ENCODE measurements at regions of chr16 and their contacts with region 1.

Region 1: DNA sequence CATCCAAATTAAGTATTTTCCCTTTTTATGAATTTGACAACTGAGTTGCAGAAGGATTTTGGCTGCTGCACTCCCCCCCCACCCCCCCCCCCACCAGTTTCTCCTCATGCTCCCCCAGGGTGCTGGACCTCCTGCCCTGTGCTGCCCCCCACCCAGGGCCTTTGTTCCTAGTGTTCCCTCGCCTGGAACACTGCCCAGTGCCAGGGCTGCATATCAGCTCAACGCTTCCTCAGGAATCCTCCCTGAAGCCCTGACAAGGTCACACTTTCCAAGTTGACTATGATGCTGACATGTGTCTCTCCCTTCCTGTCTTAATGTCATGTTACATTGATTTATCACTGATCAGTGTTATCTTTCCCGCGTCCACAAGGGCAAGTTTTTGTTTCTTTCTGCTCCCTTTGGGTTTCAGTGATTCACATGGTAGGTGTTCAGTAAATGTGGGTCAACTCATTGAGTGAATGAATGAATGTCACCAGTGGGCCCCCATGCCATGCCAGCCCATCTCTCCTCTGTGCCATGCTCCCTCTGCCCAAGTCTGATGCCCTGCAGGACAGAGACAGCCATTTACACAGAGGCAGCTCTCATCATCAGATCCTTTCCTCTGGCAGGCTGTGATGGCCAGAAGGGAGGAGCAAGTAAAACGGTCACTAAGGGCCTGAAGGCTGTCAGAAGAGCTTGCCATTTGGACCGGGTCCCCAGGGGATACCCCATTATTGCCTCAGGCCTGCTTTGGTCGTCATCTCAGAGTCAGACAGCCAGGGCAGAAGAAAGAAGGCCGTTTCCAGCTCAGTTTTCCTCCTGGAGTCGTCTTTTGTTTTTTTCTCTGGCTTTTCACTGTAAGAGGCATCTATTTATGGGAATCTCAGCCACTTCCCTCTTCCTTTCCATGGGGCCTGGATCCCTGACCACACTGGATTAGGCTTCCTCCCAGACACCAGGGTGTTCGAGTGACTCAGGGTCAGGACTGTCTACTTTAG is 386.2 kb downstream of the SNX29 start:
- DNase-seq: no peak
- H3K4me3 ChIP-seq: no peak overlapping the region
- H3K27ac ChIP-seq: peak overlapping the region in 1 of 2 donors; percentile 36
- H3K4me1 ChIP-seq: no peaks in the 10 kb centered on the region
- H3K27me3 ChIP-seq: no peaks in the 10 kb centered on the region
- CTCF ChIP-seq: no peak
- POLR2A ChIP-seq: no peak

Region 2: DNA sequence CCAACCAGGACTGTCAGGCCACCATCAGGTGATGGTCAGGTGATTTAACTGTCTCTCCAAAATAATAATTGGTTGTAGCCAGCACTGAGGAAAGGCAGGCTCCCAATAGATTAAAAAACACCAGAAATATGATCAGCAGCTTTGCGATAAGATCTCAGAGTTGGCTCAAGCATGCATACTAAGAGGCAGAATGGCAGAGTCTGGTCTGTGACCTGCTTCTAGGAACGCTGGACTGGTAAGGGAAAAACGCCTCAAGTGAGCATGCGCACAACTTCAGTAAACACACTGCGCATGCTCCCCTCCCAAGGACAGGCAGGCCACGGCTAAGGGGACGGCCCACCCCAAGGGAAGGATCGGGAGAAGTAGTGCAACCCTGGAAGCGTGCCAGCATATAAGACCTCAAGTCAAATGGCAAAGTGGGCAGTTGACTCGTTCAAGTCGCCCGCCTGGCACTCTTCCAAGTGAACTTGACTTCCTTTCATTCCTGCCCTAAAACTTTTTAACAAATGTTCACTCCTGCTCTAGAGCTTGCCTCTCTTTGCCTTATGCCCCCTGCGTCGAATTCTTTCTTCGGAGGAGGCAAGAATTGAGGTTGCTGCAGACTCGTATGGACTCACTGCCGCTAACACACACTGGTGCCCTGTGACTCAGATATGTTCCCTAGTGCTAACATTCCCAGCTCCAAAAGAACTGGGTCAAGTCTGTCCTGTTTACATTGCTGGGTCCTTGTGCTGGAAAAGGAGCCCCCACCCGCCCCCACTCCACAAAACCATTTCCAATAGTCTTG is 1059.2 kb before region 1 on chr16:
- intact Hi-C with region 1: loop called (anchors 5 kb)
- DNase-seq: peak; percentile 41 to 65
- H3K4me3 ChIP-seq: peak overlapping the region in 1 of 3 donors; percentile 53
- H3K27ac ChIP-seq: peak overlapping the region; percentile 12 to 76
- H3K4me1 ChIP-seq: no peaks in the 10 kb centered on the region
- H3K27me3 ChIP-seq: no peaks in the 10 kb centered on the region
- CTCF ChIP-seq: no peak
- POLR2A ChIP-seq: no peak

Region 3: DNA sequence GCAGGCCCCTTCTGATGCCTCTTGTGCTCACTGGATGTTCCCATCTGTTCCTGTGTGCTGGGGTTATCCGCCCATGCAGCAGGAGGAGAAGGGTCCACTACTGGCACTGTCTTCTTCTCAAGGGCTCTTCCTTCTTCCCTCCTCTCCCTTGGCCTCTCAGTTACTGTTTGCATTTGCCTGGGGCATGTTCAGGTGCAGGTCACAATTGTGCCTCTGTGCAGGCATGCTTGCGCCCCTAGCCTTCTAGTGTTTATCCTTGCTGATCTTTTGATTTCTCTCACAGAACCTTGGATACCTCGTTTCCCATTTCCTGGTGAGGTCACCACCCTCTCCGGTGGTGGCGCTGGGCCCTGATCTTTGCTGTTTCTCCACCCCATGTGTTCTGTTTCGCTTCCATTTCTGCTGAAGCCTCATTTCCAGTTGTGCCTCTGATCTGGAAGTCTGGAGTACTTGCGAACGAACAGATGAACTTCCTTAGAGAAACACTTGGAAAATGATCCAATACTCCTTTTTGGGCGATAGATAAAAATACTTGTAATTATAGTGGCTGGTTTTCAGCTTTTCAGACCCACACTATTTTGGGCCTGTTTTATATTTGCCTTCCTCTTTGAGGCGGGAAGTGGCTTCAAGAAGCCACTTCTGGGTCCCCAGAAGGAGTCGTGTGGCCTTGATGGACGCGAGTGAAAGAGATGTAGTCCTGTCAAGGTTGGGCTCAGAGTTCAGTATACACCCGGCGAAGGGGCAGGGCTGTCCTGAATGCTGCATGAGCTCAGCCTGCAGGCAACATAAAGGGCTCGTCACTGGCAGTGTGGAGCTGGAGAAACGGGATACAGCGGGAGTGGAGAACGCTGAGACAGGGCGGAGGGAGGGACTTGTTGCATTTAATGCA is 73.4 kb before region 1 on chr16:
- intact Hi-C with region 1: no loop called
- DNase-seq: peak in 1 of 2 donors; percentile 64
- H3K4me3 ChIP-seq: peak overlapping the region in 1 of 3 donors; percentile 15
- H3K27ac ChIP-seq: peak overlapping the region; percentile 10 to 25
- H3K4me1 ChIP-seq: no peaks in the 10 kb centered on the region
- H3K27me3 ChIP-seq: no peaks in the 10 kb centered on the region
- CTCF ChIP-seq: no peak
- POLR2A ChIP-seq: no peak

Region 4: GRCh38 chr16:12375046-12375740 is 12.4 kb after region 1 on chr16:
- intact Hi-C with region 1: no loop called
- DNase-seq: no peak
- H3K4me3 ChIP-seq: no peak overlapping the region
- H3K27ac ChIP-seq: peak overlapping the region in 1 of 2 donors; percentile 48
- H3K4me1 ChIP-seq: peaks cover 0 to 8% of the 10 kb centered on the region in 2 donors
- H3K27me3 ChIP-seq: no peaks in the 10 kb centered on the region
- CTCF ChIP-seq: no peak
- POLR2A ChIP-seq: no peak

Region 5: GRCh38 chr16:12426122-12426521 is 63.4 kb after region 1 on chr16:
- intact Hi-C with region 1: no loop called
- DNase-seq: no peak
- H3K4me3 ChIP-seq: no peak overlapping the region
- H3K27ac ChIP-seq: no peak overlapping the region
- H3K4me1 ChIP-seq: no peaks in the 10 kb centered on the region
- H3K27me3 ChIP-seq: no peaks in the 10 kb centered on the region
- CTCF ChIP-seq: no peak
- POLR2A ChIP-seq: no peak